ENCODE measurements at regions of chr3 and their contacts with region 1.

Region 1: DNA sequence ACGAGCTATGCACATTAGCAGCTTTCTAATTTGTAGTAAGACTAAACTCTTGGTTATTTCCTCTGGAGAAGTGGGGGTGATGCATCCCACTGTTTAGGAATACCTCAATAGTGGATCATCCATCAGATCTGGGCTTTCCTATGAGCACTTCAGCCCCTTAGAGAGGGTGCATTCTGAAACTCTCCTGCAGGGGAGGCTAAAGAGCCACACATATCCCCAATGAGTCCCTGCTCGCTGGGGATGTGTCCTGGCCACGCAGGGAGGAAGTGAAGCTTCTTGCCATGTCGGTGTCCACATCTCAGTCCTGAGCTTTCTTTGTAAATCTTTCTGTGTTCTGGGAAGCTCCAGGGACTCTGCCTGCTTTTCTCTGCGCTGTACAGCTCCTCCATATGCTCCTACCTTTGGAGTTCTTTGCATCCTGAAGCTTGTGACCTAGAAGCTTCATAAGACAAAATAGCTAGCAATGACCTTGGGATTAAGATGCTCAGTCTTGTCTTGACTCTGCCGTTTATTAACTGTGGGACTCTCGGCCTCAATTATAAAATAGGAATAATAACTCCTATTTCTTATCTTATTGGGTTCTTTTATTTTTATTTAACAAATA is 28.3 kb upstream of the MASP1 start:
- DNase-seq: peak; percentile 86
- H3K4me3 ChIP-seq: peak overlapping the region; percentile 35
- H3K27ac ChIP-seq: peak overlapping the region; percentile 38
- H3K4me1 ChIP-seq: peaks cover 6% of the 10 kb centered on the region
- H3K27me3 ChIP-seq: peaks cover 2% of the 10 kb centered on the region
- CTCF ChIP-seq: peak; percentile 94

Region 2: DNA sequence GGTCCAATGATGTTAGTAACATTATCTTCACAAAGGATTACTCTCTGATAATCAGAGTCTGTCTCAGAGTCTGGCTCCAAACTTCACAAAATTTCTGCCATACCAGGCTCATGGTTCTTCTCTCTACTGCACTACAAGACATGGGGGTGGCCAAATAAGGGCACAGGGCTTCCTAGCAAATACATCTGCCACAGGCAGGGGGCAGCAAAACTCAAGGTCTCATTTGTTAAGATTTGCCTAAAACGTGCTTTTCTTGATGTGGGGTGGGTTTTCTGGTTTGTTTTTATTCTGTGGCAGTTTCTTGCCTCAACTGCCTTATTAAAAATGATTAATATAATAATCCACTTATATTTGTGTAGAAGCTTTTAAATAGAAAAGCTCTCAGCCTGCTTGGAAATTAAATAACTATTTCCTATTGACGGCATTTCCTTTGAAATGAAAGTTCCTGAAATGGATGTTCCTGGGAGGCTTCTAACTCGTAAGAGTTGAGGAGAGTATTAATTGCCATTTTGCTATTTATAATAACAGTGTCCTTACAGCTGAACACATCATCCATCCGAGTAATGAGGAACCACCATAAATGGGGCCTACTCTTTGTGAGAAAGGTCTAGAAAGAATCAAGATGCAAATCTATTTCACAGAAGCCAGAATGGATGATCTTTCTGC is 296.6 kb after region 1 on chr3:
- CTCF ChIA-PET with region 1: interaction called, 13 read pairs
- POLR2A ChIA-PET with region 1: no interaction called
- intact Hi-C with region 1: loop called (anchors 2 kb)
- DNase-seq: peak; percentile 74
- H3K4me3 ChIP-seq: no peak overlapping the region
- H3K27ac ChIP-seq: no peak overlapping the region
- H3K4me1 ChIP-seq: no peaks in the 10 kb centered on the region
- H3K27me3 ChIP-seq: no peaks in the 10 kb centered on the region
- CTCF ChIP-seq: peak; percentile 83

Region 3: GRCh38 chr3:187651282-187651681 is 331.5 kb after region 1 on chr3:
- CTCF ChIA-PET with region 1: no interaction called
- POLR2A ChIA-PET with region 1: no interaction called
- intact Hi-C with region 1: no loop called
- DNase-seq: no peak
- H3K4me3 ChIP-seq: no peak overlapping the region
- H3K27ac ChIP-seq: no peak overlapping the region
- H3K4me1 ChIP-seq: no peaks in the 10 kb centered on the region
- H3K27me3 ChIP-seq: peaks cover 32% of the 10 kb centered on the region
- CTCF ChIP-seq: no peak

Region 4: DNA sequence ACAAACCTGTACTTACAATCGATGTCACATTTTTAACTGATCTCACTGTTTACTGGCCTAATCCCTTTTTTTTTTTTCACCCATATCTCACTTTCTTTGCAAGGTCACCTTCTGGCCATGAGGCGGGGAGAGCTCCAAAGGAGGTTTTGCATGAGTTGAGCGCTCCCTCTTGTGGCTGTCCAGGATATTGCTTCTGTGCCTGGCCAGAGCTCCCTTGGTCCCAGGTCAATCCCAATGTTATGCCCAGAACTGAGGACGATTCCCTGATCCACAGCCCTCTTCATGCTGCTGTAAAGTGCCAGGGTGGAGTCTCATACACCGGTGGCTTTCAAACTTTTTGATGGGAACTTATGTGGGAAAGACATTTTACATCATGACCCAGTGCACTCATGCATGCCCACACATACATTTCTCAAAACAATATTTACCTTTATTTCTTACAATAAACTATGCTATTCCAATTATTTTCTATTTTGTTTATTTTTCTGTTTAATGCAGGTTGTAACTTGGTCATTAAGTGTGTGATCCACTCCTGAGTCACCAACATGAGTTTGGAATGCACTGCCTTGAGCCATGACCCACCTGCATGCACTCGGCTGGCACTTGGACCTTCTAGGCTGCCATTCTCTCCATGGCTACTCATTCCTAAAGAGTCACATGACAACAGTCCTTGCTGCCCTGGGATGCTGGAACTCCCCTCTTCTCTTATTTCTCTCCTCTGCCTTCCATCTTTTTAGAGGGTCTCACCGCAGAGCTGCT is 360.0 kb after region 1 on chr3:
- CTCF ChIA-PET with region 1: interaction called, 210 read pairs
- POLR2A ChIA-PET with region 1: interaction called, 5 read pairs
- intact Hi-C with region 1: loop called (anchors 1 kb)
- DNase-seq: peak; percentile 78
- H3K4me3 ChIP-seq: no peak overlapping the region
- H3K27ac ChIP-seq: no peak overlapping the region
- H3K4me1 ChIP-seq: peaks cover 7% of the 10 kb centered on the region
- H3K27me3 ChIP-seq: no peaks in the 10 kb centered on the region
- CTCF ChIP-seq: peak; percentile 95

Region 5: DNA sequence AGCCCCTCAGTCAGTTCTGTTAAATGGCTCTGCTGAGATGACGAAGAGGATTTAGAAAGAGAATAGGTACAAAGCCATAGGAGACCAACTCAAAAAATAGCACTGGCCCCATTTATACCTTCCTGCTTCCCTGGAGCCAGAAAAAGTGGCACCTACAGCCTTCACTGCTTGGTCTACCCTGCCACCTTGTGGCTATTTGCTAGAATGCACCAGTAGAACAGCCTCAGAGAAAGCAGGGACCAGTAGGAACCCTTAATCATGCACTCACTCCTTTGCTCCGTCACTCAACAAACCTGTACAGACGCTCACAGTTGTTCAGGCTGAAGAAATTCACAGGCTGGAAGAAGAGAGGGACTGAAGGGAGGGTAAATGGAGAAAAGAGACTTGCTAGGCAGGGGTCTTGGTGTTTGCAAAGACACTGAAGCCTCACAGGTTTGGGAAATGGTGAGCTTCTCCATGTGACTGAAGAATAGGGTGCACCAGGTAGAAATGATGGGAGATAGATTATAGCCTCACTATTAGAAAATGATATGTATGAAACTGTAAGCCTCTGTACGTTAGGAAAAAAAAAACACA is 394.7 kb after region 1 on chr3:
- CTCF ChIA-PET with region 1: interaction called, 8 read pairs
- POLR2A ChIA-PET with region 1: no interaction called
- intact Hi-C with region 1: loop called (anchors 1 kb)
- DNase-seq: peak; percentile 84
- H3K4me3 ChIP-seq: no peak overlapping the region
- H3K27ac ChIP-seq: no peak overlapping the region
- H3K4me1 ChIP-seq: no peaks in the 10 kb centered on the region
- H3K27me3 ChIP-seq: no peaks in the 10 kb centered on the region
- CTCF ChIP-seq: peak; percentile 92

Measured in A673 (cell line).